ENCODE measurements at regions of chrX and their contacts with region 1.

Region 1: DNA sequence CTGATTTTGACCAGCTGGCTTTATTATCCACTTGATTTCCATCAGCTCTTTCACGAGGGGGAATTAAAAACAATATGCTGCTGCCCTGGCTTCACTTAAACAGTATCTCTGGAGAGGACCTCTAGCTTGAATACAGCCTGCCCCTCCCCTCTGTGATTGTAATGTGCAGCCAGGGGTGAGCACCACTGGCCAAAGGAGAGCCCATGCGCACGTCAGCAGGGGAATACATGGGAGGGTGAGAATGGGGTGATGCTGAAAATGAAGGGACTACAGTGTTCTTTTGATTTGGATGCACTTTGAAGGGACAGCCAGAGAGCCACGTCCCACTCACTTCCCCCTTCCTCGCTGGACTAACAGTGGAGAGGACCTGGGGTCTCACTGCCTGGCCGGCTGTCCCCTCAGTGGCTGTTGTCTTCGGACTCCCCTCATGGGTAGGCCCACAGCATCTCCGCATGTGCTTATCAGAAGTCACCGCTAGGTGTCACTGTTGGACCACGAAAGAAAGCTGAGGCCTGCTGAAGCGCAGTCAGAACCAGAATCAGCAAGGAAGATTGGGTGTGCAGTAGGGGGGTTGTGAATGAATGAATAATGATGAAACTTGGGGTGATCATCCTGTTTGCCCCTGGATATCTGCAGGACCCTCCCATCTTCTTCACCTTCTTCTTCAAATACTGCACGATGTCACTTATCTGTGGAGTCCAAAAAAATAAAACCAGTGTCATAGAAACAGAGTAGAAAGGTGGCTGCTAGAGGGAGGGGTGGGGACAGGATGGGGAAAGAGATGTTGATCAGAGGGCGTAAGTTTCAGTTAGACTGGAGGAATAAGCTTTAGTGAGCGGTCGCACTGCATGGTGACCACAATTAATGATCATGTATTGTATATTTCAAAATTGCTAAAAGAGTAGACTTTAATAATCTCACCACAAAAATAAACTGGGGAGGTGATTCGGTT is 32.8 kb downstream of the CLCN4 start:
- DNase-seq: peak; percentile 63
- ATAC-seq: peak; percentile 94
- H3K4me3 ChIP-seq: no peak overlapping the region
- H3K27ac ChIP-seq: no peak overlapping the region
- H3K4me1 ChIP-seq: no peaks in the 10 kb centered on the region
- H3K27me3 ChIP-seq: no peaks in the 10 kb centered on the region
- CTCF ChIP-seq: peak; percentile 79
- POLR2A ChIP-seq: no peak
- RAD21 ChIP-seq: peak; percentile 90

Region 2: GRCh38 chrX:10077425-10078188 is 112.0 kb before region 1 on chrX:
- CTCF ChIA-PET with region 1: no interaction called
- POLR2A ChIA-PET with region 1: no interaction called
- dilution Hi-C with region 1: no loop called
- in situ Hi-C with region 1: no loop called
- intact Hi-C with region 1: no loop called
- DNase-seq: peak; percentile 83
- ATAC-seq: peak; percentile 91
- H3K4me3 ChIP-seq: no peak overlapping the region
- H3K27ac ChIP-seq: peak overlapping the region; percentile 39; the same call in 1 of the 2 replicates
- H3K4me1 ChIP-seq: peaks cover 4% of the 10 kb centered on the region
- H3K27me3 ChIP-seq: no peaks in the 10 kb centered on the region
- CTCF ChIP-seq: no peak
- POLR2A ChIP-seq: no peak
- RAD21 ChIP-seq: no peak

Region 3: GRCh38 chrX:10447577-10448214 is 258.1 kb after region 1 on chrX:
- CTCF ChIA-PET with region 1: no interaction called
- POLR2A ChIA-PET with region 1: no interaction called
- dilution Hi-C with region 1: no loop called
- in situ Hi-C with region 1: no loop called
- intact Hi-C with region 1: loop called (anchors 10 kb)
- DNase-seq: peak; percentile 53
- ATAC-seq: no peak; the same call in 1 of the 2 replicates
- H3K4me3 ChIP-seq: no peak overlapping the region
- H3K27ac ChIP-seq: no peak overlapping the region; the same call in 1 of the 2 replicates
- H3K4me1 ChIP-seq: peaks cover 5% of the 10 kb centered on the region
- H3K27me3 ChIP-seq: no peaks in the 10 kb centered on the region
- CTCF ChIP-seq: no peak
- POLR2A ChIP-seq: no peak
- RAD21 ChIP-seq: no peak

Region 4: DNA sequence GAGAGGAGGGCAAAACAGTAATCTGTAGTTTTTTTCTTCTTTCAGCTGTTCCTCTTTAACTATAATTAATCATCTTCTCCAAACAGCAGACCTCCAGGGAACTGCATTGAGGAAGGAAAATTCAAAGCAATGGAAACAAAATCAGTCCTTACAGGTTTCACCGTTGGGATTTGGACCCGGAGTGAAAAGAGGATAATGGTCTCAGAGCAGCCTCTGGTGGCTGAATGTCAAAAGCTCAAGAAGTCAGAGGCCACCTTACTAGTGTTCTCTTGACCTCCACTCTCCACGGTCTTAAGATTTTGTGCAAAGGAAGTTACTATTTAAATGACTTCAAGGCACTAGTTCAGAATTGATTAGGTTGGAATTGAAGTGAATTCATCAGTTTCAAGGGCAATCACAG is 446.7 kb after region 1 on chrX:
- CTCF ChIA-PET with region 1: interaction called, 13 read pairs
- POLR2A ChIA-PET with region 1: no interaction called
- dilution Hi-C with region 1: no loop called
- in situ Hi-C with region 1: no loop called
- intact Hi-C with region 1: loop called (anchors 1 kb)
- DNase-seq: peak; percentile 68
- ATAC-seq: peak; percentile 62
- H3K4me3 ChIP-seq: no peak overlapping the region
- H3K27ac ChIP-seq: no peak overlapping the region
- H3K4me1 ChIP-seq: peaks cover 2% of the 10 kb centered on the region; the same call in 1 of the 2 replicates
- H3K27me3 ChIP-seq: no peaks in the 10 kb centered on the region
- CTCF ChIP-seq: peak; percentile 70
- POLR2A ChIP-seq: no peak
- RAD21 ChIP-seq: peak; percentile 83

Region 5: DNA sequence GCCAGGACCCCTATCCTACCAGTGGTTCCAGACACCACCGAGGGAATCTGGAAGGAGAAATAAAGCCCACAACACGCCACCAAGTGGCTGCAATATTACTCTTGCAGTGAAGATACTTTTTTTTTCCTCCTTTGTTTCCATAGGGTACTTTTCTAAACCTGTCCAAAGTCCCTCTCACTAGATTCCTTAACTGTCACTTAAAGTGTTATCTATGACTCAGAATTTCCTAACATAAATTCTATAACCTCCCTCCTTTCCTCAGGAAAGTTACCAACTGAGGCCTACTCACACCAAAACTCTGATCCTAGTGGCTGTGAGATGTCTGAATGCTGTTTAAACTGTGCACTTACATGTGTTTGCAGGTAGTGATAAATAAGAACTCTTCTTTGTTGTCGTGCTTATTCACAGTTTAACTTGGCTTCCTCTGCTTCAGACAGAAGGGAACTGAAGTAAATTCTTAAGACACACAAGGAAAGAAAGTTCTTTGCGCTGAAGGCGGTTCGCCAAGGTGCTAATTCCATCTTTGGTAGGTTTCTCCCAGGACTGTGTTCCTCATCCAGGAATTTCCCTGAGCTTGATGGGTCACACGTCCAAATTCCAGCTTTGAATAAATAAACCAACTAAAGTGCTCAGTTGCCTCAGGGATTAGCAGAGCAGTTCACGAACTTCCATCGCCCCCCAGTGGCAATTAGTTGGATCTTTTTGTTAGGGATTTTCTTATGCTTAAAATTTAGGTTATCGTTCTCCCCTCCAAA is 910.9 kb after region 1 on chrX:
- CTCF ChIA-PET with region 1: interaction called, 4 read pairs
- POLR2A ChIA-PET with region 1: no interaction called
- dilution Hi-C with region 1: no loop called
- in situ Hi-C with region 1: no loop called
- intact Hi-C with region 1: loop called (anchors 1 kb)
- DNase-seq: peak; percentile 80
- ATAC-seq: peak; percentile 80
- H3K4me3 ChIP-seq: no peak overlapping the region
- H3K27ac ChIP-seq: peak overlapping the region; percentile 69; the same call in 1 of the 2 replicates
- H3K4me1 ChIP-seq: 0 out of 2 replicates have a peak, but pooled peaks cover 2% of the 10 kb centered on the region
- H3K27me3 ChIP-seq: no peaks in the 10 kb centered on the region
- CTCF ChIP-seq: peak; percentile 66
- POLR2A ChIP-seq: no peak
- RAD21 ChIP-seq: peak; percentile 81

Region 6: GRCh38 chrX:11137543-11138139 is 948.0 kb after region 1 on chrX:
- CTCF ChIA-PET with region 1: interaction called, 12 read pairs
- POLR2A ChIA-PET with region 1: no interaction called
- dilution Hi-C with region 1: loop called (anchors 25 kb)
- in situ Hi-C with region 1: loop called (anchors 5 kb)
- intact Hi-C with region 1: loop called (anchors 1 kb)
- DNase-seq: peak; percentile 52
- ATAC-seq: no peak
- H3K4me3 ChIP-seq: no peak overlapping the region
- H3K27ac ChIP-seq: no peak overlapping the region
- H3K4me1 ChIP-seq: no peaks in the 10 kb centered on the region
- H3K27me3 ChIP-seq: no peaks in the 10 kb centered on the region
- CTCF ChIP-seq: peak; percentile 63
- POLR2A ChIP-seq: no peak
- RAD21 ChIP-seq: peak; percentile 51

Region 7: GRCh38 chrX:11533211-11533651 is 1343.6 kb after region 1 on chrX:
- CTCF ChIA-PET with region 1: no interaction called
- POLR2A ChIA-PET with region 1: no interaction called
- dilution Hi-C with region 1: no loop called
- in situ Hi-C with region 1: loop called (anchors 10 kb)
- intact Hi-C with region 1: loop called (anchors 5 kb)
- DNase-seq: peak; percentile 89
- ATAC-seq: peak; percentile 89
- H3K4me3 ChIP-seq: no peak overlapping the region
- H3K27ac ChIP-seq: no peak overlapping the region
- H3K4me1 ChIP-seq: peaks cover 2% of the 10 kb centered on the region; the same call in 1 of the 2 replicates
- H3K27me3 ChIP-seq: no peaks in the 10 kb centered on the region
- CTCF ChIP-seq: peak; percentile 99
- POLR2A ChIP-seq: no peak
- RAD21 ChIP-seq: peak; percentile 71

Region 8: GRCh38 chrX:11770320-11770719 is 1580.7 kb after region 1 on chrX:
- CTCF ChIA-PET with region 1: no interaction called
- POLR2A ChIA-PET with region 1: no interaction called
- dilution Hi-C with region 1: no loop called
- in situ Hi-C with region 1: loop called (anchors 25 kb)
- intact Hi-C with region 1: loop called (anchors 2 kb)
- DNase-seq: peak; percentile 63
- ATAC-seq: peak; percentile 90
- H3K4me3 ChIP-seq: no peak overlapping the region
- H3K27ac ChIP-seq: no peak overlapping the region
- H3K4me1 ChIP-seq: no peaks in the 10 kb centered on the region
- H3K27me3 ChIP-seq: no peaks in the 10 kb centered on the region
- CTCF ChIP-seq: peak; percentile 89
- POLR2A ChIP-seq: no peak
- RAD21 ChIP-seq: peak; percentile 79

Measured in IMR-90 (cell line).